Activated B cell treated with CpG ODN at 0.5 μM for 24 hours (primary cell): ENCODE measurements at regions of chr13 and their contacts with region 1.

Region 1: DNA sequence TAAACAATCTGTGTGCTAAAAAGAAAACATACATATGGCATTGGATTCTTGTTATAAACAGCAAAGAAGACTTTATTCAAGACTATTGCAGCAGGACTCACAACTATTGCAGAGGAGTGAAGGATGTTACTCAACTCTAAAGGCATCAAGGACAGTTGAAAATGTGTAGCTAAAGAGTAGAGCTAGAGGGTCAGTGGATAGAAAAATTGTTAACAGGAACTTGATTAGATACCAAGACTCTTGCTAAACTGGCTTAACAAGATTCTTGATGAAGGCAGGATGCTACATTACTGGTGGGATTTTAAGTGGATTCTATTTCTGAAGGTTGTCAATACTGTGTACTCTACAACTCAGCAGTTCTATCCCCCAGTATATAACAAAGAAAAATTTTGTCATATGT is 1183.3 kb downstream of the SLITRK1 start:
- DNase-seq: no peak
- ATAC-seq: no peak
- H3K4me3 Mint-ChIP-seq: no peak overlapping the region
- H3K27ac Mint-ChIP-seq: no peak overlapping the region
- H3K4me1 Mint-ChIP-seq: no peaks in the 10 kb centered on the region
- H3K27me3 Mint-ChIP-seq: no peaks in the 10 kb centered on the region
- CTCF ChIP-seq: no peak

Region 2: DNA sequence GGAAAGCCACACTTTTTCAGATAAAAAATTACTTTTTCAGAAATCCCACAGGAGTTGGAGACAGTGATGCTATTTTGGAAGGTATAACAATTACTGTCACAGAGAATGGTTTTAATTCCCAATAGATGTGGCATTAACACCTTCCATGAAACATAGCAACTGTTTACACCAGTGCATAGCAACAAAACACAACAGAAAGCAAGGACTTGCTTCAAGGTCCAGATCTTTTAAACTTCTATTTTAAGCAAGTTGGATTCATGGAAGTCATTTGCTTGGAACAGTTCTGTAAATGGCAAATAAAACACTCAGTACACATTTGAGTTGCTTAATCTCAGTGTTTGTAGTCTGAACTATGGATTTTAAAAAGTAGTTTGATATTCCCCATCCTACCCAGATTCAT is 1972.1 kb before region 1 on chr13:
- CTCF ChIA-PET with region 1: no interaction called
- POLR2A ChIA-PET with region 1: no interaction called
- intact Hi-C with region 1: loop called (anchors 5 kb)
- DNase-seq: no peak
- ATAC-seq: no peak
- H3K4me3 Mint-ChIP-seq: no peak overlapping the region
- H3K27ac Mint-ChIP-seq: no peak overlapping the region
- H3K4me1 Mint-ChIP-seq: no peaks in the 10 kb centered on the region
- H3K27me3 Mint-ChIP-seq: no peaks in the 10 kb centered on the region
- CTCF ChIP-seq: no peak